GM12878 (cell line): ENCODE measurements at regions of chr20 and their contacts with region 1.

Region 1: DNA sequence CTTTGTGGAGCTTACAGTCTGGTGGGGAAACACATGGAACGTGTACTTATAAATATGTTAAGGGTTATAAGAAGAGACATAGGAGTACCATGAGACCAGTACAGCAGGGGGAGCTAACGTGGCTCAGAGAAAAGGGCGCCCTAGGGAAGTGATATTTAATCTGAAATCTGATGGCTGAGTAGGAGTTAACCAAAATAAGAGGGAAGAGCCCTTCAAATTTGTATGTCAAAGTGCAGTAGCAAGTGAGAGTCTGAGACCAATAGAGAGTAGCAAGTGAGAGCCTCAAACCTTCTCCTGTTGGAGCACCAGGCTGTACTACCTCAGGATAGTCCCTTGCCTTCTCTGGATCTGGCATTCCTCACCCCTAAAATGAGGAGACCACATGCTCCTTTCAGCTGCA is 6.1 kb upstream of the PKIG start:
- DNase-seq: no peak
- ATAC-seq: peak; percentile 86
- H3K4me3 ChIP-seq: no peak overlapping the region
- H3K27ac ChIP-seq: no peak overlapping the region
- H3K4me1 ChIP-seq: peaks cover 27% of the 10 kb centered on the region
- H3K27me3 ChIP-seq: no peaks in the 10 kb centered on the region
- CTCF ChIP-seq: peak; percentile 51 to 64 (median 59)
- EP300 ChIP-seq: no peak
- POLR2A ChIP-seq: no peak
- RAD21 ChIP-seq: peak; percentile 77

Region 2: GRCh38 chr20:44412402-44413144 is 163.7 kb before region 1 on chr20:
- CTCF ChIA-PET with region 1: no interaction called
- POLR2A ChIA-PET with region 1: no interaction called
- RAD21 ChIA-PET with region 1: no interaction called
- SMC1A ChIA-PET with region 1: no interaction called
- in situ Hi-C with region 1: no loop called
- intact Hi-C with region 1: no loop called
- DNase-seq: no peak
- ATAC-seq: no peak
- H3K4me3 ChIP-seq: no peak overlapping the region
- H3K27ac ChIP-seq: no peak overlapping the region
- H3K4me1 ChIP-seq: no peaks in the 10 kb centered on the region
- H3K27me3 ChIP-seq: peaks cover 2 to 8% of the 10 kb centered on the region in 2 experiments
- CTCF ChIP-seq: no peak
- EP300 ChIP-seq: no peak
- POLR2A ChIP-seq: no peak
- RAD21 ChIP-seq: no peak

Region 3: GRCh38 chr20:44560229-44560628 is 16.1 kb before region 1 on chr20:
- CTCF ChIA-PET with region 1: interaction called, 11 read pairs
- POLR2A ChIA-PET with region 1: interaction called, 6 read pairs
- RAD21 ChIA-PET with region 1: interaction called, 4 read pairs
- SMC1A ChIA-PET with region 1: interaction called, 15 read pairs
- in situ Hi-C with region 1: no loop called
- intact Hi-C with region 1: no loop called
- DNase-seq: no peak
- ATAC-seq: peak; percentile 63
- H3K4me3 ChIP-seq: no peak overlapping the region
- H3K27ac ChIP-seq: no peak overlapping the region
- H3K4me1 ChIP-seq: peaks cover 2% of the 10 kb centered on the region; the same call in 1 of the 2 replicates
- H3K27me3 ChIP-seq: no peaks in the 10 kb centered on the region
- CTCF ChIP-seq: no peak
- EP300 ChIP-seq: no peak
- POLR2A ChIP-seq: no peak
- RAD21 ChIP-seq: no peak

Region 4: GRCh38 chr20:44590980-44591778 is 14.9 kb after region 1 on chr20:
- CTCF ChIA-PET with region 1: interaction called, 52 read pairs
- POLR2A ChIA-PET with region 1: interaction called, 6 read pairs
- RAD21 ChIA-PET with region 1: interaction called, 27 read pairs
- SMC1A ChIA-PET with region 1: interaction called, 70 read pairs
- in situ Hi-C with region 1: no loop called
- intact Hi-C with region 1: no loop called
- DNase-seq: no peak
- ATAC-seq: 0 out of 3 replicates have a peak, but pooled peaks have one; percentile 7
- H3K4me3 ChIP-seq: no peak overlapping the region
- H3K27ac ChIP-seq: no peak overlapping the region
- H3K4me1 ChIP-seq: peaks cover 35% of the 10 kb centered on the region
- H3K27me3 ChIP-seq: no peaks in the 10 kb centered on the region
- CTCF ChIP-seq: no peak
- EP300 ChIP-seq: no peak
- POLR2A ChIP-seq: no peak
- RAD21 ChIP-seq: no peak

Region 5: DNA sequence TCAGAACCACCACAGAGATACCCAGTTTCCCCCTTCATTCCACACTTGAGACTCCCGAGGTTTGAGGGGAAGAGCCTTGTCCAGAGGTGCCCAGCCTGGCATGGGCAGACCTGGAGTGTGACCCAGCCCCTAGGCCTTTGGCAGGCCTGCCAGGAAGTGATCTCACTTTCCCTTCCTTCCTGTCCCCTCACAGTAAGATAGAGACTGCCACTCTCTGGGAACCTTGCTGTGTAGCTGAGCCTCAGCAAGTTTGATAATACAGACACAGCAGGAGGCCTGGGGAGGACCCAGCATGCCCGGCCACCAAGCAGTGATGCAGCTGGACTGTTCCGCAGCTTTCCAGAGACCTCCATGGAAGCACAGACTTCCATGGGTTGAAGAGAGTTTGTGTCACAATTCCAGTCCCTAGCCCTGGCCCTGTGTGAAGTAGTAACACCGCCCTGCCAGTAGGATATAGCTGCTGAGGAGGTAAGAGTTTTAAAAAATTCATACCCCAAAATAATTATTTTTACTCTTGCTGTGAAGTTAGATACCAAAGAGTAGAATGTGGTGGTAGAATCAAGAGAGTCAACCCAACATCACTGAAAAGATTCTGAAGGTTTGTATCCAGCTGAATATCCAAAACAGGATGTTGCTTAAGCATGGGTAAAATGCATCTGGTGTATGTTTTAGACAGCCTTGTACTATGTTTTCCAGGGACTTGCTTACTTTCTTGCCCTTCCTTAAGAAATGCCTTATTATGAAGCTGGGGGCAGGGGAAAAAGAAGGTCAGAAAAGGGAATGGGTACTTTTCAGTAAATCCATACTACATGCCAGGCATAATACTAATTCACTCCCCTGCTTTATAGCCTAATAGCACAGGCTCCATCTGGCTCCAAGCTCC is 22.4 kb after region 1 on chr20:
- CTCF ChIA-PET with region 1: interaction called, 141 read pairs
- POLR2A ChIA-PET with region 1: interaction called, 39 read pairs
- RAD21 ChIA-PET with region 1: interaction called, 35 read pairs
- SMC1A ChIA-PET with region 1: interaction called, 70 read pairs
- in situ Hi-C with region 1: no loop called
- intact Hi-C with region 1: no loop called
- DNase-seq: no peak
- ATAC-seq: peak; percentile 75
- H3K4me3 ChIP-seq: peak overlapping the region; percentile 28; the same call in 1 of the 2 replicates
- H3K27ac ChIP-seq: peak overlapping the region; percentile 0
- H3K4me1 ChIP-seq: peaks cover 25% of the 10 kb centered on the region
- H3K27me3 ChIP-seq: no peaks in the 10 kb centered on the region
- CTCF ChIP-seq: peak; percentile 12 to 25 (median 17); a peak in 3 of 6 replicates
- EP300 ChIP-seq: no peak
- POLR2A ChIP-seq: peak; percentile 58
- RAD21 ChIP-seq: peak; percentile 46; the same call in 1 of the 2 replicates

Region 6: DNA sequence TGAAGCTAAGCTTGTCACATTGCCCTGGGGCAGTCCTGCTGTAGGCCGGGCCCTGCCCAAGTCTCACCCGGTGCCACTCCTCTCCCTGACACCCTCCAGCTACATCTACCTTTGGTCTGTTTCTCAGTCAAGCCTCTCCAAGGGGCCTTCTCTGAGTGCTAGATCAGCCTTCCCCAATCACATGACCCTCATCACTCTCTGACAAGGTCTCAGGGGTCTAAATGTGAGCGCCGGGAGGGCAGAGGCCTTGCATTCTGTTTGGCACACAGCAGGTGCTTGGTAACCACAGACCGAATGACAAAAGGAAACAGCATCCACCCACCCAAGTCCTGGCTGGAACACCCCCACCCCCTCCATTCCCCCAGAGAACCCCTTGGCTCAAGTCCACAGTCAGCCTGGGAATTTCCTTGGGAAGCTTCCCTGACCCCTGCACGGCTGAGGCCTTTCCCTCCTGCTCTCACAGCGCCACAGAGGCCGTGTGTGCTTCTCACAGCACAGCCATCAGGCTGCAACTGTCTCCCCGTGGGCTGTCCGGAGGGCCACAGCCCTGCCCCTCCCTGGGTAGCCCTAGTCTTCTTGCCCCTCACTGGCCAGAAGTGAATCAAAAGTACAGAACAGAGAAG is 39.0 kb after region 1 on chr20:
- CTCF ChIA-PET with region 1: interaction called, 158 read pairs
- POLR2A ChIA-PET with region 1: interaction called, 9 read pairs
- RAD21 ChIA-PET with region 1: interaction called, 97 read pairs
- SMC1A ChIA-PET with region 1: interaction called, 85 read pairs
- in situ Hi-C with region 1: no loop called
- intact Hi-C with region 1: loop called (anchors 1 kb)
- DNase-seq: no peak
- ATAC-seq: peak; percentile 7; the same call in 2 of the 3 replicates
- H3K4me3 ChIP-seq: no peak overlapping the region
- H3K27ac ChIP-seq: peak overlapping the region; percentile 43; the same call in 1 of the 2 replicates
- H3K4me1 ChIP-seq: peaks cover 21% of the 10 kb centered on the region
- H3K27me3 ChIP-seq: no peaks in the 10 kb centered on the region
- CTCF ChIP-seq: no peak
- EP300 ChIP-seq: no peak
- POLR2A ChIP-seq: no peak
- RAD21 ChIP-seq: no peak

Region 7: GRCh38 chr20:44642203-44643153 is 66.2 kb after region 1 on chr20:
- CTCF ChIA-PET with region 1: interaction called, 21 read pairs
- POLR2A ChIA-PET with region 1: interaction called, 3 read pairs
- RAD21 ChIA-PET with region 1: interaction called, 26 read pairs
- SMC1A ChIA-PET with region 1: interaction called, 7 read pairs
- in situ Hi-C with region 1: no loop called
- intact Hi-C with region 1: no loop called
- DNase-seq: peak; percentile 77
- ATAC-seq: peak; percentile 65
- H3K4me3 ChIP-seq: peak overlapping the region; percentile 16; the same call in 1 of the 2 replicates
- H3K27ac ChIP-seq: peak overlapping the region; percentile 99
- H3K4me1 ChIP-seq: peaks cover 68% of the 10 kb centered on the region
- H3K27me3 ChIP-seq: no peaks in the 10 kb centered on the region
- CTCF ChIP-seq: peak; percentile 18 to 42 (median 22); a peak in 5 of 6 replicates
- EP300 ChIP-seq: peak in 1 of 2 experiments; percentile 17; a peak in 1 of 4 replicates
- POLR2A ChIP-seq: peak; percentile 51; the same call in 1 of the 2 replicates
- RAD21 ChIP-seq: 0 out of 2 replicates have a peak, but pooled peaks have one; percentile 17